ENCODE measurements at regions of chr9 and their contacts with region 1.

Region 1: DNA sequence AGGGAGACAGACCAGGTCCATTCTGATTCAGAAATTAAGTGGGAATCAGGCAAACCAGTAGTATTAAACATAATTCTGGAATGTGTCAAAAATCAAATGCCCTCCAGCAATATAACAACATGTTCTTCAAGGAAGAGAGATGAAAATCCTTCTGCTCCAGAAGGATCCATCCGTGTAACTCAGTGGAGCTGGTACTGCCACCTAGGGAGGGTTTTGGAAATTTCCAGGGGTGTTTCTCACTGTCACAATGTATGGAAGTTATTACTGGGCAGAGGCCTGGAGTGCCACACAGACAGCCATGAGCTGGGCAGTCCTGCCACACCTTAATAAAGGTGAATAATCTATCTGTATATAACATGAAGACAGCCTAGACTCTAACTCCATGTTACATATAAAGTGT is 87.5 kb downstream of the TTLL11 start:
- DNase-seq: no peak
- H3K4me3 ChIP-seq: no peak overlapping the region
- CTCF ChIP-seq: peak; percentile 61

Region 2: GRCh38 chr9:121557581-121558447 is 447.8 kb before region 1 on chr9:
- CTCF ChIA-PET with region 1: interaction called, 12 read pairs
- POLR2A ChIA-PET with region 1: no interaction called
- DNase-seq: peak; percentile 76
- H3K4me3 ChIP-seq: peak overlapping the region; percentile 18
- CTCF ChIP-seq: no peak

Region 3: DNA sequence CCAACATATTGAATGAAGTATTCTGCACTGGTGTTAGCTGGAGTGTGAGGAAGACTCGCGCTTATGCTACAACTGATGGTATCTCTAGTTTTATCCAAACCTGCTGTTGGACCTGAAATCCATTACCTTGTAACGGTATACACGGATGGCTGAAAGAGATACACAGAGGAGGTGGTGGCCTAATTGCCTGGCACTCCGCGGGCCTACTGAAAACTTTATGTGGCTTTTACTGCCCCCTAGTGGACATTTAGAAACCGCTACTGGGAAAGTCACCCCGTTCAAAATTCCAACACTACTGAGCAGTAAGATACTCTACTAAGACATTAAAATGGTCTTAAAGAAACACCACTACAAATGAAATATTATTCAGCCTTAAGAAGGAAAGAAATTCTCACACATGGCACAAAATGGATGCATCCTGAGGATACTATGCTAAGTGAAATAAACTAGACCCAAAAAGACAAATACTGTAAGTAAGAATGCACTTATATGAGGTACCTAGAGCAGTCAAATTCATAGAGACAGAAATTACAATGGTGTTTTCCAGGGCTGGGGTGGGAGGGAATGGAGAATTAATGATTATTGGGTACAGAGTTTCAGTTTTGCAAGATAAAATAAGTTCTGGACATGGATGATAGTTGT is 12.9 kb before region 1 on chr9:
- CTCF ChIA-PET with region 1: interaction called, 15 read pairs
- POLR2A ChIA-PET with region 1: no interaction called
- DNase-seq: peak; percentile 21
- H3K4me3 ChIP-seq: no peak overlapping the region
- CTCF ChIP-seq: peak; percentile 55

Region 4: GRCh38 chr9:122016744-122017143 is 11.1 kb after region 1 on chr9:
- CTCF ChIA-PET with region 1: interaction called, 10 read pairs
- POLR2A ChIA-PET with region 1: no interaction called
- DNase-seq: no peak
- H3K4me3 ChIP-seq: no peak overlapping the region
- CTCF ChIP-seq: peak; percentile 23

Measured in AG04449 (cell line).